SK-N-SH (cell line): ENCODE measurements at regions of chr7 and their contacts with region 1.

Region 1: GRCh38 chr7:30276203-30276900 is 8.0 kb upstream of the ZNRF2 start:
- DNase-seq: peak; percentile 67
- H3K4me3 ChIP-seq: no peak overlapping the region
- H3K27ac ChIP-seq: no peak overlapping the region
- H3K4me1 ChIP-seq: no peaks in the 10 kb centered on the region
- H3K27me3 ChIP-seq: no peaks in the 10 kb centered on the region
- CTCF ChIP-seq: peak; percentile 89
- EP300 ChIP-seq: no peak
- RAD21 ChIP-seq: peak; percentile 98

Region 2: DNA sequence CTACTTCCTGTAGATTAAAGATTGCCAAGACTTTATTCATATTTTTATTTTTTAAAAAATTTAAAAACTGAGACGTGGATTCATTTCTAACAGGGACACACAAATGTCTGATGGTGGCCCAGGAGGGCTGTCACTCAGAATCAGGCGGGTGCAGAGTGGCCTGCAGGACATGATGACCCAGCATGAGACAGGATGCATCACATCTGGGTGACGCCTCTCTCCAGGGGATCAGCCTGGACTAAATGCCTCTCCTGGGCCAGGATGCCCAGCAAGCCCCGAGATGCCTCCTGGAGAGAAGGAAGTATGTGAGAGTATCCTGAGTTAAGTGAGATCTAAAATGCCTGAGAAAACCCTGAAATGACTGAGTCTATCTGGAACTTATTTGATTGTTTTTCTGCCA is 158.5 kb before region 1 on chr7:
- CTCF ChIA-PET with region 1: no interaction called
- POLR2A ChIA-PET with region 1: no interaction called
- DNase-seq: no peak
- H3K4me3 ChIP-seq: no peak overlapping the region
- H3K27ac ChIP-seq: no peak overlapping the region
- H3K4me1 ChIP-seq: no peaks in the 10 kb centered on the region
- H3K27me3 ChIP-seq: no peaks in the 10 kb centered on the region
- CTCF ChIP-seq: no peak
- EP300 ChIP-seq: no peak
- RAD21 ChIP-seq: no peak

Region 3: DNA sequence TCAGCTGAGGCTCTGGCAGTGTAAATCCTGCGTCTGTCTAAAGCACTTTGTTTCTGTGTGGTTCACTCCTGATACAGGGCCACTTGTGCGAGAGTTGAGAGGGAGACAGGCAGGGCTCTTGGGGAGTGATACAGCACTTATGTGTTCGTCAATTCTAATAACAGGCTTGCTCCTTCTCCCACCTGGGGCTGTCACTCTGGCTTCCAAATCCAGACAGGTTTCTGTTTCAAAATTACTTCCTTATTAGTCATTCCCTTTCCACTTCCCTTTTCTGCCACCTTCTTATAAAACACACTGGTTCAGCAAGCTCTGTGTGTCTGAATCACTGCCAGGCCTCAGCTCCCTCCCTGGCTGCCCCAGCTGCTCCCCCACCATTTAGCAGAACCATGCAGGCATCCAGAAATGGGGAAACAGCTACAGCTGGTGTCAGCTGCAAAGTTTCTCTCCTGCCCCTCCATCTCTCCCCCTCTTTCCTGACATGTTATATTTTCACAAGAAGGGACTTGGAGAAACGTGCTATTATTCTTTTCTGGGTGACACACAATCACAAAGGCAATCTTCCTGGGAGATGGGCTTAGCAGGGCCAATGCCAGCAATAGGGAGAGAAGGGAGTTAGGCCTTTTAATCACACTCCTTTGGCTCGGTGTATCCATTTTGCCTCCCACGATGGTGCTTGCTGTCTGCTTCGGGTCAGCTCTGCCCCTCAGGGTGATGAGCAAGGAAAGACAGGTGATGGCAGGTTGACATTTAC is 50.3 kb before region 1 on chr7:
- CTCF ChIA-PET with region 1: interaction called, 13 read pairs
- POLR2A ChIA-PET with region 1: no interaction called
- DNase-seq: peak; percentile 32
- H3K4me3 ChIP-seq: no peak overlapping the region
- H3K27ac ChIP-seq: peak overlapping the region in 1 of 2 experiments; percentile 79; a peak in 2 of 4 replicates
- H3K4me1 ChIP-seq: peaks cover 9 to 24% of the 10 kb centered on the region in 2 experiments; a peak in 2 of 4 replicates
- H3K27me3 ChIP-seq: no peaks in the 10 kb centered on the region
- CTCF ChIP-seq: no peak
- EP300 ChIP-seq: no peak
- RAD21 ChIP-seq: no peak

Region 4: DNA sequence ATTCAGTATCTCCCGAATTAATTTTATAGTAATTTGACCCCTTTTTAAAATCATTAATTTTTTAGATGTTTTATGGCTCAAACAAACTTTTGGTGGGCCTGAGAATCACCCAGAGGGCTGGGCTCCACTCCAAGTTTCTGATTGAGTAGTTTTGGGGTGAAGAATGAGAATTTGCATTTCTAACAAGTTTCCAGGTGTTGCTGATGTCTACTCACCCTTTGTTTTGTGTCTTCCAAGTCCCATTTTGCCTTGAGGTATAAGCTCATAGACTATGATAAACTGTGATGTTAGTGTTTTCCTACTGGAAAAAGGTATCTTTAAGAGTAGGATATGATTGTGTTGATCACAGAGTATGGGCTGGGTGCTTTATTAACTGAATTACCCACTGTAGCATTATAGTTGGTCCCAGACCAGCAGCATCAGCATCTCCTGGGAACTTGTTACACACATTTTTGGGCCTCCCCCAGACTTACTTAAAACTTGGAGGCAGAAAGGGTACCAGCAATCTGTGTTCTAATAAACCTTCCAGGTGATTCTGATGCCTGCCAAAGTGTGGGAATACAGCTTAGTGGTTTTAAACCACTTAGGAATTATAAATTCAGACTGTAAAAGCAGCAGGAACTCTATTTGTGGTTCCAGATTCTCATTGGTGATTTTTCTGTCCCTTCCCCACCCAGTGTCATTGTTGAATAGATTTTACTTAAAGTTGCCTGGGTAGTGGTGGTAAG is 27.1 kb after region 1 on chr7:
- CTCF ChIA-PET with region 1: interaction called, 10 read pairs
- POLR2A ChIA-PET with region 1: interaction called, 3 read pairs
- DNase-seq: no peak
- H3K4me3 ChIP-seq: no peak overlapping the region
- H3K27ac ChIP-seq: no peak overlapping the region
- H3K4me1 ChIP-seq: peaks cover 0 to 5% of the 10 kb centered on the region in 2 experiments; a peak in 3 of 4 replicates
- H3K27me3 ChIP-seq: no peaks in the 10 kb centered on the region
- CTCF ChIP-seq: no peak
- EP300 ChIP-seq: no peak
- RAD21 ChIP-seq: no peak

Region 5: GRCh38 chr7:30335763-30336487 is 59.6 kb after region 1 on chr7:
- CTCF ChIA-PET with region 1: no interaction called
- POLR2A ChIA-PET with region 1: no interaction called
- DNase-seq: no peak
- H3K4me3 ChIP-seq: no peak overlapping the region
- H3K27ac ChIP-seq: no peak overlapping the region
- H3K4me1 ChIP-seq: peaks cover 0 to 6% of the 10 kb centered on the region in 2 experiments; a peak in 2 of 4 replicates
- H3K27me3 ChIP-seq: no peaks in the 10 kb centered on the region
- CTCF ChIP-seq: no peak
- EP300 ChIP-seq: no peak
- RAD21 ChIP-seq: no peak

Region 6: DNA sequence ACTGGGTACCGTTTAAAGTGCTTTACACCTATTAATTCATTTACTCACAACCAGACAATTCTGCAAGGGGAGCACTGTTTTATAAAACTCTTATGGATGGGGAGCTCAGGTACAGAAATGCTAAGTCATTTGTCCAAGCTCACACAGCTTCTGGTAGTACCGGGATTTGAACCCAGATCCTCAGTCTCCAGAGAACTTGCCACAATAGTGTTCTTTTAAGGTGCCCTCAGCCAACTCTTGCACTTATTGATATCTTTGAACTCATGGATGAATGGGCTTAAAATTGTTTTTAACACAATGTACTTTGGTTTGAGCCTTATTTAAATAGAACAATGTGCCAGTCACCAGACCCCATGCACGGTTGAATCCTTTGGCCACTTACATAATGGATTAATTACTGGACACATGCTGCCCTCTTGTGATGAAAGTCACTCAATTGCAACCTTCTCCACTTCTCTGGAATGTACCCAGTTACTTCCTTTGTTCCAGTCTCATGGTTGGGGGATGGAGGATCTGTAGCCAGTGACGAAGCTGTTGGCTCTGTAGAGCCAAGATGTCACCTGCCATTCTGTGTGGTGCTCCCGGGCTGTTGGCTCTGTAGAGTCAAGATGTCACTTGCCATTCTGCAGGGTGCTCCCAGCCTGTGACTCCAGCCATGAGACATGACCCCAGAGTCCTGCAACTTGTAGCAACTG is 136.6 kb after region 1 on chr7:
- CTCF ChIA-PET with region 1: interaction called, 31 read pairs
- POLR2A ChIA-PET with region 1: no interaction called
- DNase-seq: peak; percentile 72
- H3K4me3 ChIP-seq: no peak overlapping the region
- H3K27ac ChIP-seq: no peak overlapping the region
- H3K4me1 ChIP-seq: peaks cover 0 to 4% of the 10 kb centered on the region in 2 experiments; a peak in 1 of 4 replicates
- H3K27me3 ChIP-seq: no peaks in the 10 kb centered on the region
- CTCF ChIP-seq: peak; percentile 86
- EP300 ChIP-seq: no peak
- RAD21 ChIP-seq: peak; percentile 95

Region 7: GRCh38 chr7:30510124-30511075 is 234.0 kb after region 1 on chr7:
- CTCF ChIA-PET with region 1: interaction called, 17 read pairs
- POLR2A ChIA-PET with region 1: no interaction called
- DNase-seq: peak; percentile 52
- H3K4me3 ChIP-seq: no peak overlapping the region
- H3K27ac ChIP-seq: 0 out of 4 replicates have a peak overlapping the region, but pooled peaks of 1 of the 2 experiments have one; percentile 67
- H3K4me1 ChIP-seq: peaks cover 0 to 10% of the 10 kb centered on the region in 2 experiments; a peak in 2 of 4 replicates
- H3K27me3 ChIP-seq: no peaks in the 10 kb centered on the region
- CTCF ChIP-seq: peak; percentile 96
- EP300 ChIP-seq: no peak
- RAD21 ChIP-seq: peak; percentile 72